ENCODE measurements at regions of chr1 and their contacts with region 1.

Region 1: GRCh38 chr1:19704247-19705113 is 39.8 kb downstream of the HTR6 start:
- DNase-seq: peak; percentile 42 to 68 (median 57)
- H3K4me3 ChIP-seq: no peak overlapping the region
- H3K4me3 Mint-ChIP-seq: no peak overlapping the region
- H3K27ac ChIP-seq: no peak overlapping the region
- H3K27ac Mint-ChIP-seq: peak overlapping the region in 1 of 7 donors; percentile 72
- H3K4me1 ChIP-seq: peaks cover 8% of the 10 kb centered on the region
- H3K4me1 Mint-ChIP-seq: peaks cover 2 to 13% (median 7%) of the 10 kb centered on the region in 4 donors
- H3K27me3 ChIP-seq: no peaks in the 10 kb centered on the region
- H3K27me3 Mint-ChIP-seq: no peaks in the 10 kb centered on the region

Region 2: GRCh38 chr1:19661721-19662228 is 42.7 kb before region 1 on chr1:
- CTCF ChIA-PET with region 1: interaction called, 177 read pairs
- POLR2A ChIA-PET with region 1: interaction called, 8 read pairs
- intact Hi-C with region 1: loop called (anchors 1 kb)
- DNase-seq: peak in 4 of 5 donors; percentile 49 to 66 (median 60)
- H3K4me3 ChIP-seq: no peak overlapping the region
- H3K4me3 Mint-ChIP-seq: peak overlapping the region in 1 of 8 donors; percentile 54
- H3K27ac ChIP-seq: no peak overlapping the region
- H3K27ac Mint-ChIP-seq: peak overlapping the region in 2 of 7 donors; percentile 71 to 74
- H3K4me1 ChIP-seq: peaks cover 27% of the 10 kb centered on the region
- H3K4me1 Mint-ChIP-seq: peaks cover 18 to 43% (median 29%) of the 10 kb centered on the region in 4 donors
- H3K27me3 ChIP-seq: no peaks in the 10 kb centered on the region
- H3K27me3 Mint-ChIP-seq: peaks cover 0 to 18% of the 10 kb centered on the region in 2 donors

Region 3: DNA sequence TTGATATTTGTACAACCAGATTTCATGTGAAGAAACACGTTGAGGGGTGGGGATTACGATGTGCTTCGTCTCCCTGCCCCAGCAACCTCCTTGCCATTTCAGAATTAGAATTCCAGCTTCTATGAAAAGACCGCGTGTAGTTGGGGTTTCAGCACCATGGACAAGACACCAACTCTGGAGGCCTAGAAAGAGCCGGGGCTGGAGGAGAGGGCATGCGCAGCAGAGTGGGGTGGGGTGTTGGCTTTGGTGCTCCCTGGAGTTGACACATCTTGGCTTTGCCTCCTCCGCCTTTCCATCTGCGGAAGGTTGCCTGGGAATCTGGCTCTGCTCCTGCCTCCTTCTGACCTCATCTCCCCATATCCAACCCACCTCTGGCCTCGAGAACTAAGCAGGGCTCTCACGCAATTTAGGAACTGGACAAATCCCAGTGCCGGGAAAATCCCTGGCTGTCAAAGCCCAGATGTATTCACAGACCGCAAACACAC is 28.0 kb before region 1 on chr1:
- CTCF ChIA-PET with region 1: interaction called, 11 read pairs
- POLR2A ChIA-PET with region 1: no interaction called
- intact Hi-C with region 1: no loop called
- DNase-seq: no peak
- H3K4me3 ChIP-seq: no peak overlapping the region
- H3K4me3 Mint-ChIP-seq: no peak overlapping the region
- H3K27ac ChIP-seq: no peak overlapping the region
- H3K27ac Mint-ChIP-seq: no peak overlapping the region
- H3K4me1 ChIP-seq: no peaks in the 10 kb centered on the region
- H3K4me1 Mint-ChIP-seq: peaks cover 0 to 5% (median 3%) of the 10 kb centered on the region in 4 donors
- H3K27me3 ChIP-seq: no peaks in the 10 kb centered on the region
- H3K27me3 Mint-ChIP-seq: peaks cover 1 to 5% of the 10 kb centered on the region in 2 donors

Region 4: DNA sequence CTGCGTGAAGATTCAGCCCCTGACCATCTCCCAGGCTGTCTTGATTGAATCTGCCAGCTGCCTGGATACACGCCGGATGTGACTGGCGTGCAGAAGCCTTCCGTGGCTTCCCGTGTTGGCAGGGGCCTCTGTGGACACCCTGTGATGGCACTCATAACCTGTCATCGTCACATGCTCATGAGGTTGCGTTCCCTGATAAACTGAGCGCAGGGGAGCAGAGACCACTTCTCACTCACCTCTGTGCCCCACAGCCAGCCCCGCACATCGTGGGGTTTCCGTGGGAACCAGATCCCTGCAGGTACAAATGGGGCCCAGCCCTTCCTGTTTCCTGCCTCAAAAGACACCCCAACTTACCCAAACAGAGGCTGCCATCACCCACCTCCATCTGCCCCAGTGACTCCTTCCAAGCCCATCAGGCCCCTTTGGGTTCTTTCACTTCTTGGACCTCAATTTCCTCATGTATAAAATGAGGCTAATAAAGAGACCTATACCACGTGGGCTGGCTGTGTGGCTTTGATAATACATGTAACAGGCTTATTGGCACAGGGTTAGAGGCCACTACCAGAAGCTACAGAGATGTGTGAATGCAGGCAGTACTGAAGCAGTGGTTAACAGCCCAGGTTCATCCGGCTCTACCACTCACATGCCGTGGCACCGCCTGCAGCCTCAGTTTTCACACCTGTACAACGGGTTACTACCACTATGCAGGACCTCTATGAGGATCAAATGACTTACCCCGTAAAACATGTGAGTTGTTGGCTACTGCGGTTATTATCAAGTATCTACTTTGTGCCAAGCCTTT is 16.2 kb before region 1 on chr1:
- CTCF ChIA-PET with region 1: interaction called, 18 read pairs
- POLR2A ChIA-PET with region 1: no interaction called
- intact Hi-C with region 1: no loop called
- DNase-seq: peak in 4 of 5 donors; percentile 65 to 83 (median 78)
- H3K4me3 ChIP-seq: peak overlapping the region; percentile 4 to 20
- H3K4me3 Mint-ChIP-seq: peak overlapping the region in 7 of 8 donors; percentile 43 to 78 (median 65)
- H3K27ac ChIP-seq: peak overlapping the region; percentile 61
- H3K27ac Mint-ChIP-seq: peak overlapping the region; percentile 73 to 95 (median 91)
- H3K4me1 ChIP-seq: peaks cover 48% of the 10 kb centered on the region
- H3K4me1 Mint-ChIP-seq: peaks cover 26 to 56% (median 40%) of the 10 kb centered on the region in 4 donors
- H3K27me3 ChIP-seq: no peaks in the 10 kb centered on the region
- H3K27me3 Mint-ChIP-seq: no peaks in the 10 kb centered on the region

Region 5: DNA sequence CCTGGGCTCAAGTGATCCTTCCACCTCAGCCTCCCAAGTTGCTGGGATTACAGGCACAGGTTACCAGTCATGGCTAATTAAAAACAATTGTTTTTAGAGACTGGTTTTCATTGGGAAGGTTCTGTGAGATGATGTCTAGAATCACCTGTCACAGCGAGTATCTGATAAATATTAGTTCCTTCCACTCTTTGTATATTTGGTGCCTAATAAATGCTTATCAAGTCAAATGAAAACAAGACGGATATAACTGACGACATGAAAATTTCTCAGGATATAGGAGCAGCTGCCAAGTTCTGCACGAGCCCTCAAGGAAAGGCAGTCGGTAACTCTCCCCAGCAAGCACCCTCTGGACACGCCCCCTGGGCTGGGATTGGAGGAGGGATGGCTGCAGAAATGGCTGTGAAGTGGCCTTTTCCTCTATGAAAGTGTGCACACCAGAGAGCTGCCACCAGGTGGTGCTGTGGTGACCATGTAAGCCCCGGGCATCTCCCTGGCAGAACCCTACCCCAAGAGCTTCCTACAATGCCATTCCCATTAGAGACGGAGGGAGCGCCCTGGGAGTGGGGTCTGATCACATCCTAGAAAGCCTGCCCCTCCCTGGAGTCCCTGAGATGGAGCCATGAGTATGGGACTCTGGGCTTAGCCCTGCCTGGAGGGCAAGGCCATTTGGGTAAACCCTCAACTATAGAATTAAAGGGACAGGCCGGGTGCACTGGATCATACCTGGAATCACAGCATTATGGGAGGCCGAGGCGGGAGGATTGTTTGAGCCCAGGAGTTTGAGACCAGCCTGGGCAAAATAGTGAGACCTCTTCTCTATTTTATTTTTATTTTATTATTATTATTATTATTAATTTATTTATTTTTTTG is 11.1 kb after region 1 on chr1:
- CTCF ChIA-PET with region 1: interaction called, 27 read pairs
- POLR2A ChIA-PET with region 1: no interaction called
- intact Hi-C with region 1: no loop called
- DNase-seq: peak; percentile 71 to 83 (median 75)
- H3K4me3 ChIP-seq: no peak overlapping the region
- H3K4me3 Mint-ChIP-seq: peak overlapping the region in 1 of 8 donors; percentile 29
- H3K27ac ChIP-seq: no peak overlapping the region
- H3K27ac Mint-ChIP-seq: peak overlapping the region in 2 of 7 donors; percentile 6 to 61
- H3K4me1 ChIP-seq: peaks cover 11% of the 10 kb centered on the region
- H3K4me1 Mint-ChIP-seq: peaks cover 10 to 15% (median 14%) of the 10 kb centered on the region in 4 donors
- H3K27me3 ChIP-seq: no peaks in the 10 kb centered on the region
- H3K27me3 Mint-ChIP-seq: no peaks in the 10 kb centered on the region

Measured in CD4-positive, alpha-beta memory T cell (primary cell).